ENCODE measurements at regions of chr1 and their contacts with region 1.

Region 1: DNA sequence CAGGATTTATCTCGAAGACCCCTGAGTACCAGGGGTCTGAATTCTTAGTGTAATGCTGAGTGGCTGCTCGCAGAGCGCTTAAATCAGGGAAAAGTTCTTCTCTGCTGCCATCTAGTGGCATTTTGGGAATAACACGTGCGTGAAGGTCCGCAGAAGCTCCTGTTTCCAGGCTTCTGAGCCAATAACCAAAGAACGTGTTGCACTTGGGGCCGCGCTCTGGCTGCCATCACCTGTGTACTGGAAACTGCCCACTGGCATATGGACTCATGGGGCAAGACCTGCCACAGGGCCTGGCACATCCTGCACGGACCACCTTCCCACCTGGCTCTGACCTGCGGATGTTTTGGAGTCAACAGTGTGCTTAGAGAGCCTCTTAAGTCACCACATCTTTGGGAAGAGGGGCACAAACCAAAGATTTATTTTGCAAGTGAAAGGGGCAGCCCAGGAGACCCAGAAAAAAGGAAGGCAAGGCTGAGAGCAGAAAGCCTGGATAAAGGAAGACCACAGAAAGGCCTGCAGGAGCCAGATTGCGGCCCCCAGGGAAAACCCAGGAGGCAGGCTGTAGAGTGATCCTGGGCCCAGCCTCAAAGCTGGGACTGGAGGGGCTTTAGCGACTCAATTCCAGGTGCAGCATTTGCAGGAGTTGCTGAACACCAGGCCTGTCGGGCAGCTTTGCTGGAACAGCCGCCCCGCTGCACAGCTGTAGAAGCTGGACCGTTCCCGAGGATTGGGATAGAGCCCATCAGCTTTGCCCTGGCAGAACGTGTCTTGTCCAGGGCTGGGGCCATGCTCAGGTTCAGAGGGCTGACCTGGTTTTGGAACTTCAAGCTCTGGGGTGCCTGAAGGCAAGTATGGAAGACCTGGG is 13.0 kb downstream of the CHIT1 start:
- DNase-seq: peak; percentile 73
- H3K4me3 Mint-ChIP-seq: no peak overlapping the region
- H3K27ac Mint-ChIP-seq: no peak overlapping the region
- H3K4me1 Mint-ChIP-seq: no peaks in the 10 kb centered on the region
- H3K27me3 Mint-ChIP-seq: peaks cover 100% of the 10 kb centered on the region
- CTCF ChIP-seq: peak; percentile 67

Region 2: GRCh38 chr1:203038891-203039608 is 177.5 kb before region 1 on chr1:
- CTCF ChIA-PET with region 1: interaction called, 88 read pairs
- intact Hi-C with region 1: loop called (anchors 1 kb)
- DNase-seq: peak; percentile 83
- H3K4me3 Mint-ChIP-seq: no peak overlapping the region
- H3K27ac Mint-ChIP-seq: no peak overlapping the region
- H3K4me1 Mint-ChIP-seq: no peaks in the 10 kb centered on the region
- H3K27me3 Mint-ChIP-seq: peaks cover 100% of the 10 kb centered on the region
- CTCF ChIP-seq: peak; percentile 91

Region 3: DNA sequence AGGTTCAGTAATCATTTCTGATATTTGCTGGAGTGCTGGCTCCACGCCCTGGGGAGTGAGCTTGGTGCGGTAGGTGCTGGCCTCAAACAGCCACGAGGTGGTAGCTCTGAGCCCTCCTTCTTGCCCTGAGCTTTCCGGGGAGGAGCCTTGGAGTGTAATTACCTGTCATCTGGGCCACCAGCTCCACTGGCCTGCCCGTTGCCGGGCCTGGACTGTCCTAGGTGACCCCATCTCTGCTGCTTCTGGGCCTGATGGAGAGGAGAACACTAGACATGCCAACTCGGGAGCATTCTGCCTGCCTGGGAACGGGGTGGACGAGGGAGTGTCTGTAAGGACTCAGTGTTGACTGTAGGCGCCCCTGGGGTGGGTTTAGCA is 50.0 kb before region 1 on chr1:
- CTCF ChIA-PET with region 1: interaction called, 18 read pairs
- intact Hi-C with region 1: no loop called
- DNase-seq: peak; percentile 58
- H3K4me3 Mint-ChIP-seq: no peak overlapping the region
- H3K27ac Mint-ChIP-seq: no peak overlapping the region
- H3K4me1 Mint-ChIP-seq: peaks cover 7% of the 10 kb centered on the region
- H3K27me3 Mint-ChIP-seq: peaks cover 87% of the 10 kb centered on the region
- CTCF ChIP-seq: no peak